ENCODE measurements at regions of chr7 and their contacts with region 1.

Region 1: DNA sequence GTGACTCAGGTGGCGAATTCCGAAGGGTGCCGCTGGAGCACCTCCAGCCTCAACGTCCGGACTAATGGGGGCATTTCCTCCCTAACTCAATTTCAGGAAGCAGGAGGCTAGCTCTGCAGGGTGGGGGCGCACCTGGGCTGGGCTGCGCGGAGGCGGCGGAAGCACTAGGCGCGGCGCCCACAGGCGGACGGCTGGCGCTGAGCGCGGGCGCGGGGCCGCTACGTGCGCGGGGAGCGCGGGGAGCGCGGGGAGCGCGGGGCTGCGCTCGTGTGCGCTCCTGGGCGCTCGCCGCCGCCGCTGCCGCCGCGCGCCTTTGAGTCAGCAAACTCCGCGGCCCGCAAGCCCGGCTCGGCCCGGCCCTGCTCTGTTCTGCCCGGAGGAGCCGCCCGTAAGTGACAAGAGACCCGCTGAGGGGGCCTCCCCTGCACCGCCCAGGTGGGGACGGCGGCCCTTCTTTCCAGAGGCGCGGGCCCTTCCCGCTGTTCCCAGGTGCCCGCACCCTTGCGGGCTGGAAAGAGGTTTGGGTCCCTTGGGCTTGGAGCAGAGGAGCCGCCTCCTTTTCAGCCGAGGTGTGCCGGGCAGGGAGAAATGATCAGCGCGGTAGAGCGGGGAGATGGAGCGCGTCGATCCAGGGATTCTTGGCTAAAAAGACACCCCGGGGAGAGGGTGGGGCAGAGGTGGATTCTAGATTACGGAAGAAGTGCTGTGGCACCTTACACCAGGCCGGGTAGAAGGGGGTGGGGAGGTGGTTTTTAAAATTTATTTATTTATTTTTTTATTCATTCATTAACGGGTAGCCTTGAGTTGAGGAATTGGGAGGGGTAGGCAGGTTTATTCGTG is at the start of gene SNX10:
- DNase-seq: peak; percentile 90
- ATAC-seq: peak; percentile 78
- H3K4me3 ChIP-seq: peak within 1 kb of the TSS; percentile 89 to 96 (median 90)
- H3K4me3 Mint-ChIP-seq: peak within 1 kb of the TSS; percentile 94
- H3K27ac ChIP-seq: peak within 1 kb of the TSS; percentile 60 to 82
- H3K27ac Mint-ChIP-seq: peak within 1 kb of the TSS; percentile 96
- H3K4me1 ChIP-seq: peaks cover 42 to 50% of the 10 kb centered on the region in 2 donors
- H3K4me1 Mint-ChIP-seq: peaks cover 45% of the 10 kb centered on the region
- H3K27me3 ChIP-seq: no peaks in the 10 kb centered on the region
- H3K27me3 Mint-ChIP-seq: no peaks in the 10 kb centered on the region
- CTCF ChIP-seq: peak; percentile 46
- total RNA-seq, gene SNX10: 26.5 and 33.6 TPM in 2 replicates

Region 2: DNA sequence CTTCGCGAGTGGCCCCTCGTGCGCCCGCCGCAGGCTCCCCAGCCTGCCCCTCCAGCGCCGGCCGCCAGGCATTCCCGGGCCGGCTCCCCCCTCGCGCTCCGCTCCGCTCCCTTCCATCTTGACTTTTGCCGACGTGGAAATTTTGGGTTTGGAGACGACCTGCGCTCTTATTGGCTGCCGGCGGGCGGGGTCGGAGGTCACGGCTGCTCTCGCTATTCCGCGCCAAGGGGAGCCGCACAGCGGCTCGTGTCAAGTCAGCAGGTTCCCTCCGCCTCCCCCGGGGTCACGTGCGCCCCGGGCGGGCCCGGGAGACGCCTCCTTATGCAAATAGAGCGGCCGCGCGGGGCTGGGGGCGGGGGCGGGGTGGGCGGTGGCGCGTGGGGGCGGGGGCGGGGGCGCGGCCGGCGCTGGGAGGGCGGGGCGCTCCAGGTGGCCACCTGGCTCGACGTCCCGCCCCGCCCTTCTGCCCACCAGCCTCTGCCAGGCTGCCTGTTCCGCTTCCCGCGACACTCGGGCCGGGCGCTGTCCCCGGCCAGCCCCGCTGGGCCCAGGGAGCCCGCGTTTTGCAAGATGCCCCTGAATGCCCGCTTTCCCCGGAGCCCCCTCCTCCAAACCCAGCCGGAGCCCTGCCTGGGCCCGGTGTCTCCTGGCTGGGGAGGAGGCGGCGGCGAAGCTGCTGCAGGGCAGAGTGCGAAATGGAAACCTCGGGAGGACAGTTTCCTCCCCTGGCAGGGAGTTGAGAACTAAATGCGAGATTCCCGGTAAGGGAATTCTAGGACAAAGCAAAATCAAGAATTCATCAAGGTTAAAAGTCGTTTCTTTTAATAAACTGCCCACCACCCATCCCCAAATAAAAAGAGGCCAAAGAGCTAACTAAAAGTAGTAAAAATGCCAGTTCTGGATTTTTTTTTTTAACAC is 340.6 kb before region 1 on chr7:
- CTCF ChIA-PET with region 1: no interaction called
- POLR2A ChIA-PET with region 1: no interaction called
- intact Hi-C with region 1: loop called (anchors 5 kb)
- DNase-seq: peak; percentile 90
- ATAC-seq: peak; percentile 90
- H3K4me3 ChIP-seq: peak overlapping the region; percentile 15 to 69 (median 51)
- H3K4me3 Mint-ChIP-seq: peak overlapping the region; percentile 89
- H3K27ac ChIP-seq: no peak overlapping the region
- H3K27ac Mint-ChIP-seq: peak overlapping the region; percentile 78
- H3K4me1 ChIP-seq: peaks cover 32 to 33% of the 10 kb centered on the region in 2 donors
- H3K4me1 Mint-ChIP-seq: peaks cover 35% of the 10 kb centered on the region
- H3K27me3 ChIP-seq: peaks cover 0 to 38% (median 33%) of the 10 kb centered on the region in 4 experiments
- H3K27me3 Mint-ChIP-seq: peaks cover 30% of the 10 kb centered on the region
- CTCF ChIP-seq: no peak

Region 3: GRCh38 chr7:26078437-26079336 is 213.2 kb before region 1 on chr7:
- CTCF ChIA-PET with region 1: interaction called, 8 read pairs
- POLR2A ChIA-PET with region 1: no interaction called
- intact Hi-C with region 1: loop called (anchors 5 kb)
- DNase-seq: peak; percentile 88
- ATAC-seq: peak; percentile 100
- H3K4me3 ChIP-seq: no peak overlapping the region
- H3K4me3 Mint-ChIP-seq: peak overlapping the region; percentile 35
- H3K27ac ChIP-seq: no peak overlapping the region
- H3K27ac Mint-ChIP-seq: no peak overlapping the region
- H3K4me1 ChIP-seq: peaks cover 6 to 9% of the 10 kb centered on the region in 2 donors
- H3K4me1 Mint-ChIP-seq: peaks cover 9% of the 10 kb centered on the region
- H3K27me3 ChIP-seq: peaks cover 0 to 31% (median 14%) of the 10 kb centered on the region in 4 experiments
- H3K27me3 Mint-ChIP-seq: peaks cover 53% of the 10 kb centered on the region
- CTCF ChIP-seq: peak; percentile 71

Region 4: GRCh38 chr7:26278770-26279169 is 13.1 kb before region 1 on chr7:
- CTCF ChIA-PET with region 1: interaction called, 19 read pairs
- POLR2A ChIA-PET with region 1: interaction called, 3 read pairs
- intact Hi-C with region 1: loop called (anchors 2 kb)
- DNase-seq: peak; percentile 66
- ATAC-seq: peak; percentile 64
- H3K4me3 ChIP-seq: no peak overlapping the region
- H3K4me3 Mint-ChIP-seq: no peak overlapping the region
- H3K27ac ChIP-seq: no peak overlapping the region
- H3K27ac Mint-ChIP-seq: no peak overlapping the region
- H3K4me1 ChIP-seq: peaks cover 0 to 3% of the 10 kb centered on the region in 2 donors
- H3K4me1 Mint-ChIP-seq: peaks cover 9% of the 10 kb centered on the region
- H3K27me3 ChIP-seq: no peaks in the 10 kb centered on the region
- H3K27me3 Mint-ChIP-seq: no peaks in the 10 kb centered on the region
- CTCF ChIP-seq: peak; percentile 64

Region 5: GRCh38 chr7:26318921-26319320 is 27.0 kb after region 1 on chr7:
- CTCF ChIA-PET with region 1: interaction called, 9 read pairs
- POLR2A ChIA-PET with region 1: interaction called, 5 read pairs
- intact Hi-C with region 1: loop called (anchors 1 kb)
- DNase-seq: no peak
- ATAC-seq: no peak
- H3K4me3 ChIP-seq: no peak overlapping the region
- H3K4me3 Mint-ChIP-seq: no peak overlapping the region
- H3K27ac ChIP-seq: peak overlapping the region in 1 of 2 donors; percentile 74
- H3K27ac Mint-ChIP-seq: peak overlapping the region; percentile 61
- H3K4me1 ChIP-seq: peaks cover 41% of the 10 kb centered on the region in 2 donors
- H3K4me1 Mint-ChIP-seq: peaks cover 68% of the 10 kb centered on the region
- H3K27me3 ChIP-seq: no peaks in the 10 kb centered on the region
- H3K27me3 Mint-ChIP-seq: no peaks in the 10 kb centered on the region
- CTCF ChIP-seq: no peak

Region 6: DNA sequence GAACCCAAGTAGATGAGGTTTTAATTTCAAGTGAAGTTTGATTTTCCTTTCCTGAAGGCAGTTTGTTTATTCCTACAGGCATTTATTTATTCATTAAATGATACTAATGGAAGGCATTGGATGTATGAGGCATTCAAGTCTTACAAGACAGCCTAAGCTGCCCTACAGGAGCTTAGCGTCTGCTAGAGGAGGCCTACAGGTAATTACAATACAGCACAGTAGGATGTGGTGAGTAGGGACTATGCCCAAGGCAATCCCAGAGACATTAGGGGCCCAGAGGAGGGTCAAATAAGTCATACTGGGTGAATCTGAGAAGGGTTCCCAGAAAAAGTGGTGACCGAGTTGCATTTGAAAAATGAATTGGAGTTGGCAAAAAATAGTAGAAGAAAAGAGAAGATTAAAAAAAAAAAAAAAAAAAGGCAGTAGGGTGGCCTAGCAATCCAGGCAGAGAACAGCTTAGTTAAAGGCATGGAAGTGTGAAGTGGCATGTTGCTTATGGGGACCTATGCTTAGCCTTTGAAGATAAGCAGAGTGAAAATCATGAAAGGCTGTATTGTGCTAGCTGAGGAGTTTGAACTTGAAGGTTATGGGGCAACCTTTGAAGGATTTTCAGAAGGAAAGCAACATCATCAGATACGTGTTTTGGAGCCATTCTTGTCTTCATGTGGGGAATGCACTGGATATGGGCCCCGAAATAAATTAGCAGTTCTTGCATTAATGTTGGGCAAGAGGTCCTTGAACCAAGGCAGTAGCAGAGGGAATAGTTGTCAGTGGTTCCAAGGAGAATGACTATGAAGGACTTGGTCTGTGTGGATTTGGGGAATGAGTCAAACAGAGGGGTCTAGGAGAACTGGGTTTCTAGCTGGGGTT is 65.2 kb after region 1 on chr7:
- CTCF ChIA-PET with region 1: interaction called, 190 read pairs
- POLR2A ChIA-PET with region 1: interaction called, 4 read pairs
- intact Hi-C with region 1: loop called (anchors 1 kb)
- DNase-seq: no peak
- ATAC-seq: no peak
- H3K4me3 ChIP-seq: no peak overlapping the region
- H3K4me3 Mint-ChIP-seq: no peak overlapping the region
- H3K27ac ChIP-seq: no peak overlapping the region
- H3K27ac Mint-ChIP-seq: peak overlapping the region; percentile 58
- H3K4me1 ChIP-seq: peaks cover 21 to 37% of the 10 kb centered on the region in 2 donors
- H3K4me1 Mint-ChIP-seq: peaks cover 42% of the 10 kb centered on the region
- H3K27me3 ChIP-seq: no peaks in the 10 kb centered on the region
- H3K27me3 Mint-ChIP-seq: no peaks in the 10 kb centered on the region
- CTCF ChIP-seq: no peak

Region 7: GRCh38 chr7:26667500-26668133 is 375.7 kb after region 1 on chr7:
- CTCF ChIA-PET with region 1: no interaction called
- POLR2A ChIA-PET with region 1: no interaction called
- intact Hi-C with region 1: loop called (anchors 5 kb)
- DNase-seq: peak; percentile 75
- ATAC-seq: peak; percentile 66
- H3K4me3 ChIP-seq: no peak overlapping the region
- H3K4me3 Mint-ChIP-seq: no peak overlapping the region
- H3K27ac ChIP-seq: no peak overlapping the region
- H3K27ac Mint-ChIP-seq: no peak overlapping the region
- H3K4me1 ChIP-seq: peaks cover 0 to 6% of the 10 kb centered on the region in 2 donors
- H3K4me1 Mint-ChIP-seq: peaks cover 18% of the 10 kb centered on the region
- H3K27me3 ChIP-seq: no peaks in the 10 kb centered on the region
- H3K27me3 Mint-ChIP-seq: no peaks in the 10 kb centered on the region
- CTCF ChIP-seq: peak; percentile 77